ENCODE measurements at regions of chr1 and their contacts with region 1.

Region 1: GRCh38 chr1:111471012-111471411 is 2.8 kb upstream of the C1orf162 start:
- DNase-seq: peak; percentile 84
- H3K4me3 Mint-ChIP-seq: no peak overlapping the region
- H3K27ac Mint-ChIP-seq: no peak overlapping the region
- H3K4me1 Mint-ChIP-seq: peaks cover 22% of the 10 kb centered on the region
- H3K27me3 Mint-ChIP-seq: no peaks in the 10 kb centered on the region

Region 2: GRCh38 chr1:111481387-111482221 is 10.6 kb after region 1 on chr1:
- CTCF ChIA-PET with region 1: interaction called, 10 read pairs
- DNase-seq: peak; percentile 79
- H3K4me3 Mint-ChIP-seq: no peak overlapping the region
- H3K27ac Mint-ChIP-seq: no peak overlapping the region
- H3K4me1 Mint-ChIP-seq: peaks cover 46% of the 10 kb centered on the region
- H3K27me3 Mint-ChIP-seq: peaks cover 21% of the 10 kb centered on the region

Measured in activated naive CD4-positive, alpha-beta T cell treated with anti-CD3 and anti-CD28 coated beads, Interleukin-2, amount 10 ng/mL, durations not matched to agents 7 days and 5 days (primary cell).